BJ (cell line): ENCODE measurements at regions of chr18 and their contacts with region 1.

Region 1: DNA sequence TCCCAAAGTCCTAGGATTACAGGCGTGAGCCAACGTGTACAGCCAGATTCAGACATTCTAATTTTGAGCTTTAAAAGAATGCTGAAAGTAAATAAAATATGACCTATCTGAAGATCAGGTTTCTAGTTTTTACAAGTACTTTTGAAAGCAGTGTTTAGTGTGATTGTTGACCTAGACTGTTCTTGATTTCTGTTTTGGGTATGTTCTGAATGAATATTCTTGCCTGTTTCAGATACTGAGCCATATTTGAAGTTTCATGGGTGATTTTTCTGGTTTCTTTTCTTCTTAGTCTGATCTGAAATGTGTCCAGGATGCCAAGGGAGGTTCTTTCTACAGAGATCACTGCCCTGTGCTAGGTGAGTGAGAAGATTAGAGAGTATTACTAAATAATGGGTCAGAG is 37.2 kb downstream of the MIB1 start:
- DNase-seq: no peak
- H3K4me3 ChIP-seq: no peak overlapping the region
- H3K27me3 ChIP-seq: no peaks in the 10 kb centered on the region
- CTCF ChIP-seq: no peak

Region 2: GRCh38 chr18:21463718-21464117 is 314.1 kb before region 1 on chr18:
- CTCF ChIA-PET with region 1: no interaction called
- POLR2A ChIA-PET with region 1: interaction called, 11 read pairs
- DNase-seq: no peak
- H3K4me3 ChIP-seq: no peak overlapping the region
- H3K27me3 ChIP-seq: no peaks in the 10 kb centered on the region; the same call in 1 of the 2 replicates
- CTCF ChIP-seq: no peak

Region 3: DNA sequence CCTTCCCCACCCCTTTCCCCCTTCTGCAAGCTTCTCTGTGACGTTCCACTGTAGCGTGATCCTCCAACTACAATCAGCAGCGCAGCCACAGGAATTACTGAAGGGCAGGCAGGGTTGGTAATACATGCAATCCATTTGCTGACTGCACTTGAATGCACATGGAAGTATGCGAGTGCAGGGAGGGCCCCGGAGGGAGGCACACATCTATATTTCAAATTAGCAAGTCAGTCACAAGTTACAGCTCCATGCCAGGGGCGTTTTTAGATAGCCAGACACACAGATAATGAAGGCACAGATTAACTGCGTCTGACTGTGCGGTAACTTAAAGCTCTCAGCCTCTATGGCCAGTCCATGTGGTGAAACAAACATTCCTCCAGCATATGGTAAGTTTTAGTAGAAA is 182.4 kb after region 1 on chr18:
- CTCF ChIA-PET with region 1: no interaction called
- POLR2A ChIA-PET with region 1: no interaction called
- DNase-seq: no peak
- H3K4me3 ChIP-seq: no peak overlapping the region
- H3K27me3 ChIP-seq: no peaks in the 10 kb centered on the region; the same call in 1 of the 2 replicates
- CTCF ChIP-seq: no peak